ENCODE measurements at regions of chr19 and their contacts with region 1.

Region 1: DNA sequence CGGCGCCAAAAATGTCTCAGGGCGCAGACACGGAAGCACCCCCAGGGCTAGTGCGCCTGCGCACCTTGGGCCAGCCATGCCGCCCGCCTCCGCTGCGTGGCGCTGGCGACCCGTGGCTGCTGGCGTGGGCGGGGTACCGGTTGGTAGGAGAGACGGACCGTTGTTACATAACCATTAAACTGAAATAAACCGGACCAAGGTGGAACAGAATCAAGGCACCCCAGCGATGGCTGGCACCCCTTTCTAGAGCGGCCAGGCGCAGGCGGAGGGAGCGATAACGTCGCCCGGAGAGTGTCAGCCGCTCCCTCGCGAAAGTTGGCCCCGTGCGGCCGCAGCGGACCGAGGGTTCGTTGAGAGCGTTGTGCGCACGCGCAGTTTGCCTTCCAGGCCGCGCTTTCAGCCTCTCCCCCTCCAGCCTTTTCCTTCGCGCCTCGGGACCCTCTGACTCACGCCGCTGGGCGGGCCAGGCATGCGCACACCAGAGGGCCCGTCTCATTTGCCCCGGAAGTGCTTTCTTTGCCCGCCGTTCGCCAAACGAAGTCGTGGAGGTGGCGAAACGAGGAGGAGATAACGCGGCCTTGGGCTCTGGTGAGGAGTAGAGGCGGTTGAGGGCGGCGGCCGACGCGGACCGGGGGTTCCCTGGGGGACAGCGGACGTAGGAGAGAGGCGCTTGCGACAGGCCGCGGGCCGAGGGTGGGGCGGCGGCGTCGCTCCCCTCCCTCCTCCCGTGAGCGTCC is at the starts of genes PLEKHJ1 and SF3A2:
- DNase-seq: peak; percentile 99
- H3K4me3 ChIP-seq: peak within 1 kb of the TSS; percentile 62 to 99 (median 76)
- H3K27ac ChIP-seq: peak within 1 kb of the TSS; percentile 97 to 99 (median 98)
- H3K4me1 ChIP-seq: peaks cover 0 to 68% (median 62%) of the 10 kb centered on the region in 4 donors
- H3K27me3 ChIP-seq: no peaks in the 10 kb centered on the region
- CTCF ChIP-seq: peak; percentile 96 to 100 (median 99)
- EP300 ChIP-seq: peak in 1 of 4 donors; percentile 25
- POLR2A ChIP-seq: peak; percentile 81 to 85
- total RNA-seq, gene PLEKHJ1: 40.7 to 57.3 (median 42.8) TPM
- total RNA-seq, gene SF3A2: 17.5 to 59.8 (median 24.4) TPM

Region 2: GRCh38 chr19:2113439-2114211 is 122.9 kb before region 1 on chr19:
- intact Hi-C with region 1: no loop called
- DNase-seq: no peak
- H3K4me3 ChIP-seq: no peak overlapping the region
- H3K27ac ChIP-seq: no peak overlapping the region
- H3K4me1 ChIP-seq: no peaks in the 10 kb centered on the region
- H3K27me3 ChIP-seq: no peaks in the 10 kb centered on the region
- CTCF ChIP-seq: no peak
- EP300 ChIP-seq: no peak
- POLR2A ChIP-seq: no peak

Region 3: DNA sequence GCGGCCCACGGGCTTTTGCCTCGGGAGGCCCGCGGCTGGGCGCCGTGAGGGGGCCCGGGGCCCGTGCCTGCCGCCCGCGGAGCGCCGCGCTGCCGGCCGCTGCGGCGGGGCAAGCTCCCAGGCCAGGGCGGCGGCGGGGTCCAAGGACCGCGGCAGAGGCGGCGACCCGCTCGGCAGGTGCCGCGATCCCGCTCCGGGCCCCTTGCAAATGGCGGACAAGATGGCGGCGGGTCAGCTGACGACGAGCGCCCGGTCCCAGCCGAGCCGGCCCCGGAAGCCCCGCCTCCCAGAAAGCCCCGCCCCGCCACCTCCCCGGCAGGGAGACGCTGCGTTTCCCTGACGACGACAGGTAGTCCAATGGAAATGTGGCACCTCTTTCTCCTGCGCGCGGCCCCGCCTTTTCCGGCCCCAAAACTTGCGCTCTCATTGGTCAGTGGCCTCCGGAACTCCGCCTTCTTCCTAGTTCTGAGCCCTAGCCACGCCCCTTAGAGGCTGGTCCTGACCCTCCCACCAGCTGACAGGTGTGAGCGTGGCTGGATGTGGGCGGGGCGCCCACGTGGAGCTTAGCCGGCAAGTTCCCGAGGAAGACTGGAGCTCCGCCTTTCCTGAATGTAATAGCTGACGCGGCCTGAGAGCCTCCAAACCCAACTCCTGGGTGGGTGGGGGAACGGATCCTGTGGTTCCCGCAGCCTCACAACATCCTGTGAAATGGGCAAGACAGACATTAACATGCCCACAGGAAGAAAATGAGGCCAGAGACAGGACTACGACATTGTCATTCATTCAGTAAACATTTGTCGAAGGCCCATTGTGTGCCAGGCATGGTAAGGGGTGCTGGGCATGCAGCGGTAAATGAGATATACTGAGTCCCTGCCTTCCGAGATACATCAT is 84.9 kb before region 1 on chr19 and contains the start of gene AP3D1:
- intact Hi-C with region 1: loop called (anchors 2 kb)
- DNase-seq: peak; percentile 100
- H3K4me3 ChIP-seq: peak within 1 kb of the TSS; percentile 91 to 97 (median 95)
- H3K27ac ChIP-seq: peak within 1 kb of the TSS; percentile 86 to 90 (median 88)
- H3K4me1 ChIP-seq: peaks cover 0 to 41% (median 30%) of the 10 kb centered on the region in 4 donors
- H3K27me3 ChIP-seq: no peaks in the 10 kb centered on the region
- CTCF ChIP-seq: no peak
- EP300 ChIP-seq: no peak
- POLR2A ChIP-seq: no peak
- total RNA-seq, gene AP3D1: 43.1 to 83.1 (median 51.2) TPM

Region 4: DNA sequence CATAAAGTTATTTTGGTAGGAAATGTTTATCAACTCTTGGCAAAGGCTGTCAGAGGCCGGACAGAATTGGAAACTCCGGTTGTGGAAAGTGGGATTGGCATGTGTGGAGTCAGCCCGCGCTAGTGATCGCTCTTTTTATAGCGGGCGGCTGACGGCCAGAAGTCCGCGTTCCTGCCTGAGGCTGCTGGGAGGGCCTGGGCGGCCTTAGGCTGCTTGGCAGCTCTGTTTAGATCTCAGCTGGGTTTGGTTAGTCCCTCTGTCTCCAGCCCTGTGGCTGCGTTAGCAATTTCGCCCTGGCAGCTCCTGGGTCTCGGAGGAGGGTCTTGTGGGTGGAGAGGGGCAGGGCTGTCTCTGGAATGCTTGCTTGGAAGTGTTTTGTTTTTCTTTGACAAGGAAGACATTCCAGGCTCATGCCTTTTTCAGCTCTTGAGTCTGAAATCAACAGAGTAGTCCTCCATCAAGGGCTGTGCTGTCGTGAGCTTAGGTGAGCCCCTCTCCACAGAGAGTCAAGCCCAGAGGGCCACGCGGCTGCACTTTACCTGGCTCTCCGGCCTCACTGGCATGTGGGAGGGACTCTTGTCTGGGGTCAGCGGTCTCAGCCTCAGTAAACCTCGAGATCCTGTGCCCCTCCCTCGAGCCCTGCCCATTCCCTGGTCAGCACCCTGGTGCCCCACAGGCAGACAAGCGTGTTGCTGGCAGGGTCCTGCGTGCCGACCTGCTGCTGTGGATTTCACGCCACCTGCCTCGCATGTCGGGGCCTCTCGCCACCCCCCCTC is 50.2 kb before region 1 on chr19:
- intact Hi-C with region 1: loop called (anchors 1 kb)
- DNase-seq: peak; percentile 96
- H3K4me3 ChIP-seq: peak overlapping the region in 3 of 4 donors; percentile 0 to 21 (median 12)
- H3K27ac ChIP-seq: peak overlapping the region; percentile 80 to 92 (median 84)
- H3K4me1 ChIP-seq: peaks cover 3 to 77% (median 67%) of the 10 kb centered on the region in 4 donors
- H3K27me3 ChIP-seq: no peaks in the 10 kb centered on the region
- CTCF ChIP-seq: no peak
- EP300 ChIP-seq: peak in 2 of 4 donors; percentile 37 to 76
- POLR2A ChIP-seq: no peak

Region 5: DNA sequence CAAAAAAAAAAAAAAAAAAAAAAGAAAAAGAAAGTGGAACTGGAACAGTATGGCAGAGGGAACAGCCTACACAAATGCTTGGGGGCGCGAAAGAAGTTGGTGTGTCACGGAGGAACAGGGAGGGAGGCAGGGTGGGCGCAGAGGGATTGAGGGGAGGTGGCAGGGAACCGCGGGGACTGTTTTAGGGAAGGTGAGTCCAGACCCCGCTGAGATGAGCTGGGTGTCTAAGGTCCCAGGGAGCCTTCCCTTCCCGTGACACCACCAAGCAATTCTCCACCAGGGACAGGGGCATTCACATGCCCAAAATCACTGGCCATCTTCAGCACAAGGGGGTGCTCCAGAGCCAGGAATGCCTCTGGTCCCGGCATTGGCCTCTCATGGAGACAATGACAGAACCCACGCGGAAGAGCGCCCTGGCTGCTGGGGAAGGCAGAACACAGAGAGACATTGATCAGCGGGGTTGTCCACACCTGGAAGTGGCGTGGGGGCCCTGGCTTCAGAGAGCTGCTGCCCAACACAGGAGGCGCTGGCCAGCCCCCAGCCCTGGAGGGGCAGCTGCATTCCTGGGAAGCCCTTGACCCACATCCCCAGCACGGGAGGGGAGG is 38.6 kb after region 1 on chr19:
- intact Hi-C with region 1: loop called (anchors 1 kb)
- DNase-seq: peak; percentile 83
- H3K4me3 ChIP-seq: no peak overlapping the region
- H3K27ac ChIP-seq: peak overlapping the region in 3 of 4 donors; percentile 34 to 98 (median 59)
- H3K4me1 ChIP-seq: peaks cover 0 to 55% (median 54%) of the 10 kb centered on the region in 4 donors
- H3K27me3 ChIP-seq: no peaks in the 10 kb centered on the region
- CTCF ChIP-seq: peak; percentile 51 to 75 (median 68)
- EP300 ChIP-seq: no peak
- POLR2A ChIP-seq: no peak

Region 6: DNA sequence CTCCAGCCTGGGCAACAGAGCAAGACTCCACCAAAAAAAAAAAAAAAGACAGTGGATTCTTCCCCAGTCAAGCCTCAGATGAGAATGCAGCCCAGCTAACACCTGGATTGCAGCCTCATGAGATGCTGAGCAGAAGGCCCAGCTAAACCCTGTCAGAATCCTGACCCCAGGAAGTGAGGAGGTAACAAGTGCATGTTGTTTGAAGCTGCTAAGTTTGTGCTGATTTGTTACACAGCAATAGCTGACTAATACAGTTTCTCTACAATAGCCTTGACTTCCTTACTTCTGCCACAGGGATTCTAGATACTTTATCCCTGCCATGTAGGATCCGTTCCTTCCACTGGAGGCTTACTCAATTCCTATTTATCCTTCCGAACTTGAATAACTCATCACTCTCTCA is 144.1 kb after region 1 on chr19:
- intact Hi-C with region 1: no loop called
- DNase-seq: no peak
- H3K4me3 ChIP-seq: no peak overlapping the region
- H3K27ac ChIP-seq: no peak overlapping the region
- H3K4me1 ChIP-seq: peaks cover 0 to 4% (median 2%) of the 10 kb centered on the region in 4 donors
- H3K27me3 ChIP-seq: peaks cover 0 to 7% (median 3%) of the 10 kb centered on the region in 3 donors
- CTCF ChIP-seq: no peak
- EP300 ChIP-seq: no peak
- POLR2A ChIP-seq: no peak

Region 7: DNA sequence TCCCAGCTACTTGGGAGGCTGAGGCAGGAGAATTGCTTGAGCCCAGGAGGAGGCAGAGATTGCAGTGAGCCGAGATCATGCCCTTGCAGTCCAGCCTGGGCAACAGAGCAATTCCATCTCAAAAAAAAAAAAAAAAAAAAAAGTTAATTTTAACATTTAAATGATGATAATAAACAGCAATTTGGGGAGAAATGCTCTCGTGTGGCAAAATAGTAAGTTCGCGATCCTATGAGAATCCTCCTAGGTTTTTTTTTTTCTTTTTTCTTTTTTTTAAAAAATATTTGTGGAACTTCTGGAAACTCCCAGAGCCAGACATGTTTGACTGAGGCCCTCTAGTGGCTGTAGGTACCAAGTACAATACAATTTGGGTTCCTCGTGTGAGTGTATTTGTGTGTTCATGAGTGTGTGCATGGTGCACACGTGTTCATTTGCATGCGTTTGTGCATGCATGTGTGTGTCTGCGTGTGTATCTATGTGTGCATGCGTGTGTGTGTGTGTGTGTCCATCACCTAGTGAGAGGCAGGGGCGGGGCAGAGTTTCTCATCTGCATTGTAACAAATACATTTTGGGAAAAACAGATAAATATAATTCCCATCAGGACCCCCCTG is 154.7 kb after region 1 on chr19:
- intact Hi-C with region 1: loop called (anchors 2 kb)
- DNase-seq: no peak
- H3K4me3 ChIP-seq: no peak overlapping the region
- H3K27ac ChIP-seq: no peak overlapping the region
- H3K4me1 ChIP-seq: no peaks in the 10 kb centered on the region
- H3K27me3 ChIP-seq: peaks cover 0 to 19% (median 4%) of the 10 kb centered on the region in 3 donors
- CTCF ChIP-seq: peak; percentile 59 to 82 (median 76)
- EP300 ChIP-seq: no peak
- POLR2A ChIP-seq: no peak

Measured in sigmoid colon (tissue), 7 donors.